Heart left ventricle (tissue), 16 donors: ENCODE measurements at regions of chr1 and their contacts with region 1.

Region 1: DNA sequence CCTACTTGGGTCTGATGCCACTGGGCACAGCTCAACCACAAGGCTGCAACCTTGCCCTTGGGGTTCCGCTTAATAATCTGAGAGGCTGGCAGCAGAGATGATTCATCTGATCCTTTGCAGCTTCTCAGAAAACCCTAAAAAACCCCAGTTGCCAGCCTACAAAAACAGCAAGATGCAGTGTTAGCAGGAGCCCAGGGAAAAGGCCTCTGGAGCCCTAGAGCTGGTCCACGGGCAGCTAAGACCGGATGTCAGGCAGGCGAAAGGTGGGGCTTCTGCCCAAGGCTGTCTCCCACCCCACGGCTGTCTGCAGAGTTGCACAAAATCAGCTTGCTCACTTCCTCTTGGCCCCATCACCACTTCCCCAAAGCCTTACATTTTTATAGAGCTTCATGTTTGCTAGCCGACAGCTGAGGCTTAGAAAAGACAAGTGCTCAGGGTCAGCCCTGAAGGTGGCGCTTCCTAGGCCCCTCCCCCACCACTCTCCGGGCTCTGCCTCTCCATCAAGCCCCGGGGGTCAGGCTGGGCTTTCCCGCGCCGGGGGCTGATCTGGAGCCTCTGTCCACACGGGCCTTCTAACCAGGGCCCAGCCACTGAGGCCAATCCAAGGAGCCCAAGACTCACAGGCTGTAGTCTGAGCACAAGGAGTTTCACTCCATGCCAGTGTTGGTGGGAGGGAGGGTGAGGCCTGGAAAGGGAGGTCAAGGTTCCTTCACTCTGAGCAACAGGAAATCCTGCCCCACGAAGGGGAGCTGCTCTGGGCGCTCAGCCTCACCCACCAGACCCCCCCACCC is 4.2 kb upstream of the ADORA3 start:
- DNase-seq: peak; percentile 71 to 89 (median 85)
- ATAC-seq: peak; percentile 72 to 78 (median 76)
- H3K4me3 ChIP-seq: peak overlapping the region in 10 of 12 donors; percentile 14 to 52 (median 39)
- H3K27ac ChIP-seq: peak overlapping the region; percentile 82 to 99 (median 92)
- H3K4me1 ChIP-seq: peaks cover 6 to 100% (median 37%) of the 10 kb centered on the region in 12 donors
- H3K27me3 ChIP-seq: no peaks in the 10 kb centered on the region
- CTCF ChIP-seq: peak in 1 of 12 donors; percentile 7
- POLR2A ChIP-seq: no peak

Region 2: DNA sequence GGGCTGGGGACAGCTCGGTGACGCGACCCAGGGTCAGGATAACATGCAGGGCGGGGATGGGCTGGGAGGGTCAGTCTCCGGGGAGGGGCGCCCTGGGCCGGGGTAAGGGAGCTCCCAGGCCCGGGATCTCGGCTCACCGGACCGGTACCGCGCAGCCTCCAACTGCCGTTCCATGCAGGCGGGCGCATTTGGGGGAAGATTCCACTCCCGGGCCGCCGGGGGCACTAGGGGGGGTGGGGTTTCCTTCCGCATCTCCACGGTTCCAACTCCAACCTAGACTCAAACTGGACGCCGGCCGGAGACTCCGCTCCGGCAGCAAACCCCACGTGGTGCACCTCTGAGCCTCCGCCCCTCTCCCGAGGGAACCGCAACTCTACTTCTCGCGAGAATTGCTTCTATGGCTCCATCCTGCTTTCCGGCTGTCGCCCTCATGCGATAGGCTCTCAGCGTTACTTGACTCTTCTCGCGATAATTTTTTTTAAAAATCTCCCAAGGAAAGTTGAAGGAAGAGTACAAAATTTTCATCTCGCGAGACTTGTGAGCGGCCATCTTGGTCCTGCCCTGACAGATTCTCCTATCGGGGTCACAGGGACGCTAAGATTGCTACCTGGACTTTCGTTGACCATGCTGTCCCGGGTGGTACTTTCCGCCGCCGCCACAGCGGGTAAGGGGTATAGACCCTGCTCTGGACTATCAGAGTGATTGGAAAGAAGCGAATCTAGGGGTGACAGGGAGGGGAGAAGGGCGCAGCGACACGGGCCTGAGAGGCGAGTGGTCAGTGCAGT is 58.5 kb before region 1 on chr1 and contains the starts of genes ATP5PB and WDR77:
- intact Hi-C with region 1: loop called in 1 of 10 experiments (anchors 2 kb)
- DNase-seq: peak; percentile 93 to 97 (median 96)
- ATAC-seq: peak; percentile 93 to 96 (median 94)
- H3K4me3 ChIP-seq: peak within 1 kb of the TSS; percentile 58 to 96 (median 85)
- H3K27ac ChIP-seq: peak within 1 kb of the TSS; percentile 76 to 96 (median 90)
- H3K4me1 ChIP-seq: peaks cover 5 to 65% (median 46%) of the 10 kb centered on the region in 12 donors
- H3K27me3 ChIP-seq: no peaks in the 10 kb centered on the region
- CTCF ChIP-seq: peak in 1 of 12 donors; percentile 21
- POLR2A ChIP-seq: no peak
- total RNA-seq, gene ATP5PB: 394 to 878 (median 625) TPM
- total RNA-seq, gene WDR77: 30.5 to 48.4 (median 34.0) TPM

Region 3: GRCh38 chr1:111619635-111620440 is 112.2 kb after region 1 on chr1 and contains the start of gene RAP1A:
- intact Hi-C with region 1: loop called in 3 of 10 experiments (anchors 1 to 10 kb)
- DNase-seq: peak; percentile 96 to 98 (median 97)
- ATAC-seq: peak; percentile 96 to 98 (median 97)
- H3K4me3 ChIP-seq: peak within 1 kb of the TSS; percentile 61 to 95 (median 82)
- H3K27ac ChIP-seq: peak within 1 kb of the TSS; percentile 94 to 98 (median 98)
- H3K4me1 ChIP-seq: peaks cover 0 to 83% (median 34%) of the 10 kb centered on the region in 12 donors
- H3K27me3 ChIP-seq: no peaks in the 10 kb centered on the region
- CTCF ChIP-seq: no peak
- POLR2A ChIP-seq: peak in 1 of 2 donors; percentile 79
- total RNA-seq, gene RAP1A: 52.6 to 134 (median 99.1) TPM

Region 4: DNA sequence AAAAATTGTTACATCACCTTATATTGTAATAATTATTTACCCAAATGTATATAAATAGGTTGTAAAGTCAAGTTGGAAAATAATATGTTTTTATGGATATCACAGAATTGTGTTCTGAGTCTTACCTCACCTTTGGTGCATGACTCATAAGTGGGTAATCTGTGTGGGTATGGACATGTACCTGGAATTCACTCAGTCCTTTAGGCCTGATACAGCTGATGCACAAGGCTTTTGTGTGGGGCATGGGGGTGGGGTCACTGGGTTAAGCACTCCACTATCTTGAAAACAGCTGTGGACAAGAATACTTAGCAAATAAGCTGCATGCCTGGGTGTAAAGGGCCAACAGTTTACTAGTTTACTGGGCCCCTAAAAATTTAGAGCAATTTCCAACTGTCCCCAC is 197.2 kb after region 1 on chr1:
- intact Hi-C with region 1: loop called in 1 of 10 experiments (anchors 5 kb)
- DNase-seq: no peak
- ATAC-seq: no peak
- H3K4me3 ChIP-seq: no peak overlapping the region
- H3K27ac ChIP-seq: no peak overlapping the region
- H3K4me1 ChIP-seq: peaks cover 0 to 4% (median 0%) of the 10 kb centered on the region in 12 donors
- H3K27me3 ChIP-seq: no peaks in the 10 kb centered on the region
- CTCF ChIP-seq: no peak
- POLR2A ChIP-seq: no peak

Region 5: DNA sequence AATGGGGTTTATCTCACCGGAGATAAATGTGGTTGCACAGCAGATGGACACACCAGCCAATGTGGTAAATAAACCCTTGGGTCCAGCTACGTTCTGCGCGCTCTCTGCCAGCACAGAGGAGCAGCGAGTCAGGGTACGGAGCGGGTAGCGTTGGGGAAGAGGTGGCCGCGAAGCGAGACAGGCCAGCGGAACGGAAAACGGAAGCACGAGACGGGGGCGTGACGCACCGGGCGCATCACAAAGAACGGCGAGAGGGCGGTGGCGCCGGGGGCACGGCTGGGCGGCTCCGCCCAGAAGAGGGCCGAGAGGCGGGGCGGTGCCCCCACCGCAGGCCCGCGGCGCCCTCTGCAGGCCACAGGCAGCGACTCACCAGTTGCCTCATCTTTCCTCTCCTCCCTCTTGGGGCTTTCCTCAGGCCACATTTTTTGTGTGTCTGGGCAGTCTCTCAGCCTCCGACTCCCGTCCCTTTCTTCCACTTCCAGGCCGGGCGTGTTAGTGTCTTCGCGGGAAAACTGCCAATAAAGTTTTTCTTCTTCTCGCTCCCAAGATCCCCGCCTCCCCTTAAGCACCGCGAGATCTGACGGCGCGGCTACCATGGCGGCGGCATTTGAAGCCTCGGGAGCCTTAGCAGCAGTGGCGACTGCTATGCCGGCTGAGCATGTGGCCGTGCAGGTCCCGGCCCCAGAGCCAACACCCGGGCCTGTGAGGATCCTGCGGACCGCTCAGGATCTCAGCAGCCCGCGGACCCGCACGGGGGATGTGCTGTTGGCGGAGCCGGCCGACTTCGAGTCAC is 247.9 kb after region 1 on chr1 and contains the start of gene DDX20:
- intact Hi-C with region 1: loop called in 5 of 10 experiments (anchors 2 to 5 kb)
- DNase-seq: peak; percentile 93 to 96 (median 95)
- ATAC-seq: peak; percentile 97 to 98 (median 98)
- H3K4me3 ChIP-seq: peak within 1 kb of the TSS; percentile 69 to 91 (median 80)
- H3K27ac ChIP-seq: peak within 1 kb of the TSS; percentile 86 to 96 (median 91)
- H3K4me1 ChIP-seq: peaks cover 0 to 38% (median 17%) of the 10 kb centered on the region in 12 donors
- H3K27me3 ChIP-seq: no peaks in the 10 kb centered on the region
- CTCF ChIP-seq: peak; percentile 81 to 100 (median 95)
- POLR2A ChIP-seq: no peak
- total RNA-seq, gene DDX20: 5.7 to 12.9 (median 7.4) TPM